ENCODE measurements at regions of chr7 and their contacts with region 1.

Region 1: DNA sequence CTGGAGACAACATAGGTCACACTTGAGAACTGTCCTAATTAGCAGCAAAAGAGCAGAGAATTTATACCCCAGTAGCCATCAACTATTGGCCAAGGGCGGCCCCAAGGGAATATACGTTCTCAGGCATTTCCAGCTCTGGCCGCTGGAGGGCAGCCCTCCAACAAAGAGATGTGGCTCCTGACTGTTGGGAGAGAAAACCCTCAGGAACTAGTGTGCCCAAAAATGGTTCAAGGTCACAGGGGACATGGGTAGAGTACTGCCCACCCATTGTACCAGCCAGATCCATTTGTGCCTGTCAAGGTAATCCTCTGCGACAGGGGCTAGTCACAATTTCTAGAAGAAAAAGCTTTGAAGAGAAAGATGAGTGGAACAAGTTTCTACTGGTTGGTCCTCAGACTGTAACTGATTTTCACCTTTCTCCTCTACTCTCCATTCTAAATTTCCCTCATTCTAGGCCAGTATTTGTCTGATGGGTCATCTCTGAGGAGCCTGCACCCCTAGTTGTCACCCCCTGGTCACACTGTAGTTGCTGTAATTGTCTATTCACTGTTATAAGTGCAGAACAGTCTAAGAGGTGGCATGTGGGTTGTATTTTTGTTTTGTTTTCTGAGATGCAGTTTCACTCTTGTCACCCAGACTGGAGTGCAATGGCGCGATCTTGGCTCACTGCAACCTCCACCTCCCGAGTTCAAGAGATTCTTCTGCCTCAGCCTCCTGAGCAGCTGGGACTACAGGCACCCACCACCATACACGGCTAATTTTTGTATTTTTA is 14.7 kb upstream of the C7orf33 start:
- DNase-seq: peak; percentile 67
- CTCF ChIP-seq: peak; percentile 90

Region 2: GRCh38 chr7:148334959-148335577 is 240.8 kb before region 1 on chr7:
- CTCF ChIA-PET with region 1: no interaction called
- POLR2A ChIA-PET with region 1: no interaction called
- DNase-seq: no peak
- CTCF ChIP-seq: no peak

Region 3: DNA sequence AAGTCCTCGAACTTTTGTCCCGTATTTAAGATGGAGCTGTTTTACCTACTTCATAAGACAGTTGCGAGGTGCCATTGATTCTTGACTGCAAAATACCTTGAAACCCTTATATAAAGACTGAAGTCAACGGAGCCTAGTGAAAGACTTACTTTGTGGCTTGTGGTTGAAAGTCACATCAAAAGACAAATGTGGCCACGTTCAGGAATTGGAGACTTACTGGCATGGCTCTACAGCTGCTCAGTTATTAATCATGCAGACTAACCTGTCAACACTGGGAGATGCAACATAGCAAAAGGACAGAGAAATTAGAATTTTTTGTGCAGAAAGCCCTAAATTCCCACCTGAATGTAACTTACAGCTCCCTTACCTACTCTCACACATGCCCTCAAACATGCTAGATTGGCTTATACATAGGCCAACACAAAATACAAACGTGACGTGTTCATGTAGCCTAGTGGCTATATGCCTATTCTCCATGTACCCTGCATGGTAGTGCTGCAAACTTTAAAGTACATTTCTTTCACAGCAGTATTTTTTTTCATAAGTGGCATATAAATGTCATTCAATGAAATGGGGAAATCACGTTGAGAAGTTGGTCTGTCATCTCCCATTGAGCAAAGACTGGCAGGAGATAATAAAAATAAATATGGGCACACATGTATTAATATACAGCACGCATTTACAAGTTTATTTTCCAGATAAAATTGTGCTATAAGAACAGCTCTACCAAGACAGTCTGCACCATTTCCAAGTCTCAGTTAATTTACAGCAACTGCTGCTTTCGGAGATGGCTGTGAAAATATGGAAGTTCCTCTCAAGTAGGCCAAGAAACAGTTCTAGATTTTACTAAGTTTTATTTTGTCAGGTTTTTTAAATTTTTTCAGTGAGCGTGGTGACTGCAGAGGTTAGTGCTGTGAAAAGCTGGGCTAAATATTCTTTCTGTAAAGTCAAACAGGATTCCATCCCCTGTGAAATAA is 155.7 kb before region 1 on chr7:
- CTCF ChIA-PET with region 1: no interaction called
- POLR2A ChIA-PET with region 1: no interaction called
- DNase-seq: no peak
- CTCF ChIP-seq: no peak

Region 4: DNA sequence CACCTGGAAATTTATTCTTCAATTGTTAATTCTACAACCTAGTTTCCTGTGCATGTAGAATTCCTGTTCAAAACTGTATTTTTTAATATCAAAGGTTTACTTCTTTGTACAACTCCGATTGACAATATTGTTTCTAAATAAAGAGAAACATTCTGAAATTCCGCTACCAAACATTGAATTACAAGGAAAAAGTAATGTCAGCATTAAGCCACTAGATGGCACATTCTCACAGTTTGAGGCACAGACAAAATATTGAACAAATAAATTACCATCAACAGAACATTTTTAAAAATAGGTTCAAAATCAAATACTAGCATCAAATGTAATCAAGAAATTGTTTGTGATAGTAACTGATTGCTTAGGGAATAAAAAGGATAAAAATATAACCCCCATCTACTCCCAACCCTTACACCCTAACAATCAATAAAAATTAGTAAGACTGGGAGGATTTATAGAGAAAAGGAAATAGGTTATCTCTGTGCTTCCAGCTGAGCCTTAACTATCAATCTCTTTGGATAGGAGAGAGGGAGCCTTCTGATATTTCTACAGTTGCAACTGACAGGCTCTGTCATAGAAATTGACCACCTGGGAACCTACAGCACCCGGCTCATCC is 71.8 kb before region 1 on chr7:
- CTCF ChIA-PET with region 1: interaction called, 10 read pairs
- POLR2A ChIA-PET with region 1: no interaction called
- DNase-seq: peak; percentile 29
- CTCF ChIP-seq: peak; percentile 77

Region 5: GRCh38 chr7:148514236-148514635 is 61.6 kb before region 1 on chr7:
- CTCF ChIA-PET with region 1: no interaction called
- POLR2A ChIA-PET with region 1: no interaction called
- DNase-seq: no peak
- CTCF ChIP-seq: no peak

Region 6: GRCh38 chr7:148556924-148557323 is 18.9 kb before region 1 on chr7:
- CTCF ChIA-PET with region 1: interaction called, 56 read pairs
- POLR2A ChIA-PET with region 1: no interaction called
- DNase-seq: no peak
- CTCF ChIP-seq: no peak

Region 7: DNA sequence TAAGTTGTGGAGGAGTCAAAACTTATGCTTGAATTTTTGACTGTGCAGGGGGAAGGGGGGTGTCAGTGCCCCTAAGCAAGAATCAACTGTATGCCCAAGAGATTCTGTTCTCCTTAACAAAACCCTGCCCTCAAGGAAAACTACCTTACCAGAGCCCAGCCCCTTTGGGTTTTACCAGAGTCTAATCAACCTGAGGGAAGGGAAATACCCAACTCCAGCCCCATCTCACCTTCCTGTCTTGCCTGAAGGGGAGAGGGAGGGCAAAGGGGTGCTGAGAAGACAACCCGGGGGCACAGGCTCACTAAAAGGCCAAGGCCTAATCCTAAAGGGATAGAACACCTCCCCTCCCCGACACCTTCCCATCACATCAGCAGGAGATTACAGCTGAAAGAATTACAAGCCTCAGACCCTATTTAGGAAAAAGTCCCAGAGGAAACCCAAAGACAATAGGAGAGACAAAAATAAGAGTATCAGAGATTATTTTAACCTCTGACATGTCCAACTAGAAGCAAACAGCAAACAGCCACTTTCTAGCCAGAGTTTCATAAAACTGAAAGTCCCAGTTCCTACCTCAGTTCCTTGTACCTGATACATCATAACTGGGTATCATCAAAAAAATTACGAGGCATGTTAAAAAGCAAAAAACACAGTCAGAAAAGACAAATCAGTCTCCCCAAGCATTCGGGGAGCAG is 12.1 kb before region 1 on chr7:
- CTCF ChIA-PET with region 1: interaction called, 56 read pairs
- POLR2A ChIA-PET with region 1: no interaction called
- DNase-seq: no peak
- CTCF ChIP-seq: no peak

Region 8: DNA sequence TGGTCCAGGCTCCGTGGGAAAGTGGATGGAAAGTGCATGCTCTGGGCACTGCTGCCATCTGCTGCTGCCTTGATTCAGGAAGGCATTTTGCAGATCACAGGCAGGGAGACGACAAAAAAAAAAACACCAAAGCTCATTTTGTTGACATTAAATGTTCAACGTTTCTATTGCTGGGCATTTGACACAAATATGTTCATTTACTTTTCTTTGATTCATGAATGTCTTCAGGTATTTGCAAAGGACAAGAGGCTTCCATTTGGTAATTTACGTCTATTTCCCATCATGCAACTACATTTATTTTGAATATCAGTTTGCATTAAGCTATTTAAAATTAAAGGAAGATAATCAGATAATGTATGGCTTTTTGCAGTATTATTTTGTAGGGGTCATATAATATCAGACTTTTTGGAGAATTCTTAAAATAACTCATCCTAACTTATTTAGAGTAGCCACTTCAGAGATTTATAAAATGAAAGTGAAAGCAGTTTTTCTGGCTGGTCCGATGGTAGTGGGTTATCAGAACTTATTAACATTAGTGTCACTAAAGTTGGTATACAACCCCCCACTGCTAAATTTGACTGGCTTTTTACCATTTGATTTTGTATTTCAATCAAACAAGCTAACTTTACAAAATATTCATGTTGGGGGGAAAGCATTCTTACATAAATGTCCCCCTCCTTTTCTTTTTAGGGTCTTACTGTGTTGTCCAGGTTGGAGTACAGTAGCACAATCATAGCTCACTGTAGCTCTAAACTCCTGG is 387.2 kb after region 1 on chr7:
- CTCF ChIA-PET with region 1: interaction called, 22 read pairs
- POLR2A ChIA-PET with region 1: no interaction called
- DNase-seq: peak; percentile 64
- CTCF ChIP-seq: peak; percentile 78

Region 9: GRCh38 chr7:148975896-148976295 is 400.1 kb after region 1 on chr7:
- CTCF ChIA-PET with region 1: interaction called, 11 read pairs
- POLR2A ChIA-PET with region 1: no interaction called
- DNase-seq: no peak
- CTCF ChIP-seq: no peak

Measured in GM10248 (cell line).